Activated CD4-positive, alpha-beta T cell treated with anti-CD3 and anti-CD28 coated beads, Interleukin-2, amount 10 ng/mL, durations not matched to agents 24 days and 14 days (primary cell): ENCODE measurements at regions of chr1 and their contacts with region 1.

Region 1: GRCh38 chr1:116570358-116571200 is at the start of gene CD58:
- DNase-seq: peak; percentile 95
- H3K4me3 Mint-ChIP-seq: peak within 1 kb of the TSS; percentile 95
- H3K27ac Mint-ChIP-seq: peak within 1 kb of the TSS; percentile 88
- H3K4me1 Mint-ChIP-seq: peaks cover 60% of the 10 kb centered on the region
- H3K27me3 Mint-ChIP-seq: no peaks in the 10 kb centered on the region
- total RNA-seq, gene CD58: 26.5 and 31.0 TPM in 2 replicates

Region 2: DNA sequence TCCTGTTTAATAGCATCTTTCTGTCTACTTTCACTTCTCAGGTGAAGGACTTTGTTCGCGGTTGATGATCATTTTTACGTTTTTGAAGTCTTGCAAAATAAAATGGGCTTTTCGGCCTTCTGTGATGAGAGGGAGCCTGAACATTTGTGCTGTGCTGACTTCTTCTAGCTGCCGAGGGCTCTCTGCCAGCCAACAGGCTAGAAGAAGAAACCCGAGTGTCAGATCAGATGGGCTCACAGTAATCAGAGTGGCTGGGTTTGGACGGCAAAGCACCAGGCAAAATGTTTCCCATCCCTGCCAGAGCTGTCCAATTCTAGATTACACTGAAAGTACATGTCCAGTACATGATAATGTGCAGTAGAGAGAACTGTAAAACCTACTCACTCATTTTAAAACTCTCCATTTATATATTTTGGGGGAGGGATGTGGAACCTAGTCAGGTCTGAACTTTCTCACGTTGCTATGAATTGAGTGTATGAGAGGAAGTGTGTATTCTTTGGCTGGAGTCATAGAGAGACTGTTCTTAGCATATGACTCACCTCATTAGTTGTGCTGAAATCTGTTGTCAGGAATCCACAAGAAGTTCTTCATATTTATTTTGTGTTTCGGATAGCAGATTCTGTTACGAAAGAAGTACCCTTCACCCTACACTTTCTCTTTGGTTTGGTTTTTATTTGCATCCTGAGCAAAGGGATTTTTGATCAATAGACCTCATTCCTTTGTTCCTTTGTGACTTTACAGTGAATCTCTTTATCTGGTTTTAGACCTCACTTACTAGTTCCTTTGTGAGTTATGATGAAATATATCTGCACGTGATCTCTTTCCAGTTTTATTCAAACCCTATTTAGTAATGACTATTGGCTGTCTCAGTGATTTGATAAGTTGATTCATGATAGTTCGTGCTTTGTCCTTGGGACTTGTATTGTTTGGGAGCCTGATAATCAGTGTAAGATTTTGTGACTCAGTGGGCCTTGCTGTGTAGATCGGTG is 192.7 kb before region 1 on chr1:
- intact Hi-C with region 1: loop called (anchors 2 kb)
- DNase-seq: peak; percentile 81
- H3K4me3 Mint-ChIP-seq: peak overlapping the region; percentile 88
- H3K27ac Mint-ChIP-seq: peak overlapping the region; percentile 83
- H3K4me1 Mint-ChIP-seq: peaks cover 70% of the 10 kb centered on the region
- H3K27me3 Mint-ChIP-seq: no peaks in the 10 kb centered on the region

Region 3: GRCh38 chr1:116514708-116515525 is 55.7 kb before region 1 on chr1:
- intact Hi-C with region 1: loop called (anchors 2 kb)
- DNase-seq: peak; percentile 92
- H3K4me3 Mint-ChIP-seq: peak overlapping the region; percentile 76
- H3K27ac Mint-ChIP-seq: peak overlapping the region; percentile 93
- H3K4me1 Mint-ChIP-seq: peaks cover 64% of the 10 kb centered on the region
- H3K27me3 Mint-ChIP-seq: no peaks in the 10 kb centered on the region

Region 4: GRCh38 chr1:116724765-116725375 is 154.3 kb after region 1 on chr1:
- intact Hi-C with region 1: loop called (anchors 2 kb)
- DNase-seq: peak; percentile 92
- H3K4me3 Mint-ChIP-seq: no peak overlapping the region
- H3K27ac Mint-ChIP-seq: no peak overlapping the region
- H3K4me1 Mint-ChIP-seq: peaks cover 30% of the 10 kb centered on the region
- H3K27me3 Mint-ChIP-seq: no peaks in the 10 kb centered on the region

Region 5: DNA sequence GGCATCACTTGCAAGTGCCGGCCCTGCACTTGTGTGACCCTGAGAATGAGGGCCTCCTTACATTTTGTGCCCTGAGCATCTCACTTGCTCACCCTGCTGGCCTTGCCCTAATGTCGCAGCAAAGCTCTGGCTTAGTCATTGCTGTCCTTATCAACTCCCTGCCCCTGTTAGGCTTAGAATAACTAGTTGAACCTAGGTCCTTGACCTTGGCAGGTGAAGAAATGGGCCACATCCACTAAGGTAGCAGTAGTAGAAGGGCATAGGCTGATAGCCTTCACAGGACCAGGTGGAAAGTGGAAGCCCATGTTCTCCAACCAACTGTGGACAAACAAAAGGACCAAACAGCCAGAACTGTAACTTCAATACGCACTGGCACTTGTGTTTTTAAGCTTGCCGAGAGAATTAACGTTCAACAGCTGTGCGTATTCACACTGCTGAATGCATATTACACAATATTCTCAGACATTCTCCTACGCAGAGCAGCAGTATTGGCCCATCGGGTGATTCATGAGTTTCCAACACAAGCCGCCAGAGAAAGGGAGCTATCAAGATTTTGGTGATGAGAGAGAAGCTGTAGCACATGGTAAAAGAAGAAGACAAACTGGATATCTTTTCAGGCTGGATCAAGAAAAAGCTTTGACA is 311.4 kb after region 1 on chr1:
- intact Hi-C with region 1: loop called (anchors 5 kb)
- DNase-seq: peak; percentile 82
- H3K4me3 Mint-ChIP-seq: no peak overlapping the region
- H3K27ac Mint-ChIP-seq: no peak overlapping the region
- H3K4me1 Mint-ChIP-seq: peaks cover 28% of the 10 kb centered on the region
- H3K27me3 Mint-ChIP-seq: no peaks in the 10 kb centered on the region

Region 6: DNA sequence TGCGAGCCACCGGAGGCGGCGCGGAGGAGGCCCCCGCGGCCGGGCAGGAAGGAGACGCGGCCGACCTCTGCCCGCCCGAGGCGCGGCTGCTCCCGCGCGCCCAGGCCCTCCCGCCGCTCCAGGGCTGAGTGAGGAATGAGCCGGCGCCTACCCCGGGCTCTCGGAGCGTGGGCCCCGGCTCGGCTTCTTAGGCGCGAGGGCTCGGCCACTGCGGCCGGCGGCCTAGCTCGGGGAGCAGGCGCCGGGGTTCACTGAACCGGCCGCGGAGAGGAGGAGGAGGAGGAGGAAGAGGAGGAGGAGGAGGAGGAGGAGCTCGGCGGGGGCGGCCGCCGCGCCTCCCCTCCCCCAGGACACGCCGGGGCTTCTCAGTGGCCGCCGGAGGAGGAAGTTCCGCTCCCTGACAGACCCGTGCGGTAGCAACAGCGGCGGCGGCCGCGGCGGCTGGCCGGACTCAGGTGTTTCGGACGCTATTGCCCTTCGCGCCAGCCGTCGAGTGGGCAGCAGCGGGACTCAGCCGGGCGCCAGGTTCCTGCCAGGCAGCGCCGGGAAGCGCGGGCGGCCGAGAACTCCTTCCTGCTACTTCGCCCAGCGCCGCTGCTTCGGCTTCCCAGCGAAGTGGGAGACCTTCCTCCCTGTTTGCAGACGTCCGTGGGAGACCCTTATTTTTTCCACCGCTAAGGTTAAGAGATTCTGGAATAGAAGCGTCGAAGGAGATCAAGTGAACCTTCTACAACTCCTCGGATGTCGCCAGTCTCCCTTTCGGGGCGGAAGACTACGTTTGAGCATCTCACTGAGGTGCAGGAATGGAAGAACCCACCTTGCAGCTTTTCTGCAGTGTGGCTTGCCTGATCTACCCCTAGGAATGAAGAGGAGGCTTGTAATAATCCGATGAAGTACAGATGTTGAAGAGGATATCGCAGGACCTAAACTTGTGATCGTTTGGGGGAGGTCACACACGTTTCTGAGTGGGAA is 796.8 kb after region 1 on chr1 and contains the start of gene MAN1A2:
- intact Hi-C with region 1: loop called (anchors 10 kb)
- DNase-seq: peak; percentile 95
- H3K4me3 Mint-ChIP-seq: peak within 1 kb of the TSS; percentile 93
- H3K27ac Mint-ChIP-seq: peak within 1 kb of the TSS; percentile 93
- H3K4me1 Mint-ChIP-seq: peaks cover 41% of the 10 kb centered on the region
- H3K27me3 Mint-ChIP-seq: no peaks in the 10 kb centered on the region
- total RNA-seq, gene MAN1A2: 23.9 and 28.7 TPM in 2 replicates